ENCODE measurements at regions of chr3 and their contacts with region 1.

Region 1: GRCh38 chr3:69791919-69792399 is 52.7 kb downstream of the MITF start:
- DNase-seq: peak; percentile 44
- H3K4me3 Mint-ChIP-seq: no peak overlapping the region
- H3K27ac Mint-ChIP-seq: no peak overlapping the region
- H3K4me1 Mint-ChIP-seq: peaks cover 25% of the 10 kb centered on the region
- H3K27me3 Mint-ChIP-seq: no peaks in the 10 kb centered on the region
- CTCF ChIP-seq: peak; percentile 71

Region 2: DNA sequence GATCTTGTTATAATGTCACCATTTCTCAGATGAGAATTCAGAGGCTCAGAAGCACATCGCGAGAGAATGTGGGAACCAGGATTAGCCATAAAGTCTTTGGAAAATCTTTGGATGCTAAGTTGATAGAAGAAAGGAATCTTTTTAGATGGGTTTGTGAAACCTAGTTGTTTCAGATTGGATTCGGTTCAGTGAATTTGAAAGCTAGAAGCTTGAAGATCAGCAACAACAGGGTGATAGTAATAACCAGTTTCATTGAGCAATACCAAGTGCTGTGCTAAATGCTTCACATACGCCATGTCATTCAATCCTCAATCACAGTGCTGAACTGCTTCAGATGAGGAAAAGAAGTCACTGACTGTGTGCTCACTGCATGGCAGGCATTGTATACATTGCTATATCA is 100.1 kb before region 1 on chr3:
- CTCF ChIA-PET with region 1: interaction called, 235 read pairs
- POLR2A ChIA-PET with region 1: interaction called, 24 read pairs
- intact Hi-C with region 1: loop called (anchors 1 kb)
- DNase-seq: no peak
- H3K4me3 Mint-ChIP-seq: no peak overlapping the region
- H3K27ac Mint-ChIP-seq: no peak overlapping the region
- H3K4me1 Mint-ChIP-seq: peaks cover 6% of the 10 kb centered on the region
- H3K27me3 Mint-ChIP-seq: no peaks in the 10 kb centered on the region
- CTCF ChIP-seq: no peak

Region 3: GRCh38 chr3:69739204-69740102 is 52.5 kb before region 1 on chr3 and contains the start of gene MITF:
- CTCF ChIA-PET with region 1: interaction called, 23 read pairs
- POLR2A ChIA-PET with region 1: interaction called, 25 read pairs
- intact Hi-C with region 1: loop called (anchors 1 kb)
- DNase-seq: peak; percentile 93
- H3K4me3 Mint-ChIP-seq: peak within 1 kb of the TSS; percentile 75
- H3K27ac Mint-ChIP-seq: peak within 1 kb of the TSS; percentile 70
- H3K4me1 Mint-ChIP-seq: peaks cover 13% of the 10 kb centered on the region
- H3K27me3 Mint-ChIP-seq: peaks cover 16% of the 10 kb centered on the region
- CTCF ChIP-seq: no peak
- total RNA-seq, gene MITF: 7.4 and 16.1 TPM in 2 replicates

Region 4: DNA sequence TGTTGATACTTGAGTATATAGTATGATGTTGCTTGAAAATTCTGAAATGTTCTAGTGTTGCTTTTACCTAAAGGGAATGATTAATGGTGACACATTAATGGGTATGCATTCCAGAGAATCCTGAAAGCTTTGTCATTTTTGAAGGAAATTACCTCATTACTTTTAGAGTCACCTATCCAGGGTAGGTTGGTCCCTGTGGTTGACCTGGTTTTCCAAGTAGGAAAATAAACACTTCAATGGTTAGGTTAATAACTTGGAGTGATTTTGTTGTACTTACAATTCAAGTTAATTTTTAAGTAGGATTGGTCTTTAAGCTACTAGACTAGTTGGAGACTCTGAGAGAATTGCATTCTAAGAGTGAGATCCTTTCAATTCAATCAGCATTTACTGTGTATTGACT is 21.7 kb before region 1 on chr3:
- CTCF ChIA-PET with region 1: interaction called, 12 read pairs
- POLR2A ChIA-PET with region 1: interaction called, 10 read pairs
- intact Hi-C with region 1: no loop called
- DNase-seq: peak; percentile 38
- H3K4me3 Mint-ChIP-seq: no peak overlapping the region
- H3K27ac Mint-ChIP-seq: peak overlapping the region; percentile 76
- H3K4me1 Mint-ChIP-seq: peaks cover 61% of the 10 kb centered on the region
- H3K27me3 Mint-ChIP-seq: no peaks in the 10 kb centered on the region
- CTCF ChIP-seq: no peak

Region 5: GRCh38 chr3:69806735-69807438 is 14.9 kb after region 1 on chr3:
- CTCF ChIA-PET with region 1: interaction called, 10 read pairs
- POLR2A ChIA-PET with region 1: no interaction called
- intact Hi-C with region 1: no loop called
- DNase-seq: no peak
- H3K4me3 Mint-ChIP-seq: no peak overlapping the region
- H3K27ac Mint-ChIP-seq: no peak overlapping the region
- H3K4me1 Mint-ChIP-seq: peaks cover 6% of the 10 kb centered on the region
- H3K27me3 Mint-ChIP-seq: no peaks in the 10 kb centered on the region
- CTCF ChIP-seq: no peak

Region 6: GRCh38 chr3:69948246-69948862 is 156.4 kb after region 1 on chr3:
- CTCF ChIA-PET with region 1: interaction called, 7 read pairs
- POLR2A ChIA-PET with region 1: no interaction called
- intact Hi-C with region 1: loop called (anchors 1 kb)
- DNase-seq: peak; percentile 59
- H3K4me3 Mint-ChIP-seq: no peak overlapping the region
- H3K27ac Mint-ChIP-seq: no peak overlapping the region
- H3K4me1 Mint-ChIP-seq: no peaks in the 10 kb centered on the region
- H3K27me3 Mint-ChIP-seq: no peaks in the 10 kb centered on the region
- CTCF ChIP-seq: peak; percentile 58